Posterior vena cava (tissue), 2 donors: ENCODE measurements at regions of chr13 and their contacts with region 1.

Region 1: GRCh38 chr13:105196052-105196451 is 1339.4 kb downstream of the EFNB2 start:
- DNase-seq: no peak

Region 2: DNA sequence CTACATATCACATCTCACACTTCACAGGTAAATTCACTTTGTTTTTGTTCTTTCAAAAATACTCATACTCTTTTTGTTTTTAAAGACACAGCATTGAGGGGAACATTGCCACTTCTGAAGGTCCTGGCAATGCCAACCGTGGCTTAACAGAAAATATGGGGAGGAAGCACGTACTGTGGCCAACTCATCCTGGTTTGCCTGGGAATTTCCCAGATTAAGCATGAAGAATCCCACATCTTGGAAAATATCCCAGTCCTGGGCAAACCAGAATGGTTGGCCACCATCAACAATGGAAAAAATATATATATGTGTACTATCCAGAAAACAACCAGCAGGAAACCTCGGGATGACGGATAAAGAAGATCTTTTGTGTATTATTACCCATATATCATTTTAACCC is 1097.6 kb before region 1 on chr13:
- intact Hi-C with region 1: loop called in 1 of 2 experiments (anchors 5 kb)
- DNase-seq: no peak

Region 3: DNA sequence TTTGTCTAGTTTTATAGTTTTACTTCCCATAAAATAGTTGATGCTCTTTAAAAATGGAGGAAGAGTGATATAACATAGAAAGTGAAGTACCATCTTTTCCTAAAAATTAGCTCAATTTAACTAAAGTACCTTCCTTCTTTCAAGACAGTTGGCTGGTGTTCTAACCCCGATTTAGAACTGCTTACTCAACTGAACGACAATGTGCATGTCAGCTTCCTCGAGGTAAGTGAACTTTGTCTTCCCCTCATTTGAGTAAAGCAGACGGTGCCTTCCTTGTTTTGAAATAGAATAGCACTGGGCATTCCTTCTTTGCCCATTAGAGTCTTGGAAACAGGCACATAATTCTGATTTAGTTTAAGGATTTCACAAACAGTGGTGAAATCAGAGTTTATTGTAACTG is 179.8 kb before region 1 on chr13:
- intact Hi-C with region 1: no loop called
- DNase-seq: no peak

Region 4: GRCh38 chr13:105497597-105497996 is 301.5 kb after region 1 on chr13:
- intact Hi-C with region 1: no loop called
- DNase-seq: no peak